ENCODE measurements at regions of chr22 and their contacts with region 1.

Region 1: GRCh38 chr22:38755911-38756532 is at the start of gene SUN2:
- DNase-seq: peak; percentile 96
- ATAC-seq: peak; percentile 73
- H3K4me3 Mint-ChIP-seq: peak within 1 kb of the TSS; percentile 98
- H3K27ac Mint-ChIP-seq: peak within 1 kb of the TSS; percentile 99
- H3K4me1 Mint-ChIP-seq: peaks cover 43% of the 10 kb centered on the region
- H3K27me3 Mint-ChIP-seq: no peaks in the 10 kb centered on the region
- total RNA-seq, gene SUN2: 607 to 626 TPM

Region 2: DNA sequence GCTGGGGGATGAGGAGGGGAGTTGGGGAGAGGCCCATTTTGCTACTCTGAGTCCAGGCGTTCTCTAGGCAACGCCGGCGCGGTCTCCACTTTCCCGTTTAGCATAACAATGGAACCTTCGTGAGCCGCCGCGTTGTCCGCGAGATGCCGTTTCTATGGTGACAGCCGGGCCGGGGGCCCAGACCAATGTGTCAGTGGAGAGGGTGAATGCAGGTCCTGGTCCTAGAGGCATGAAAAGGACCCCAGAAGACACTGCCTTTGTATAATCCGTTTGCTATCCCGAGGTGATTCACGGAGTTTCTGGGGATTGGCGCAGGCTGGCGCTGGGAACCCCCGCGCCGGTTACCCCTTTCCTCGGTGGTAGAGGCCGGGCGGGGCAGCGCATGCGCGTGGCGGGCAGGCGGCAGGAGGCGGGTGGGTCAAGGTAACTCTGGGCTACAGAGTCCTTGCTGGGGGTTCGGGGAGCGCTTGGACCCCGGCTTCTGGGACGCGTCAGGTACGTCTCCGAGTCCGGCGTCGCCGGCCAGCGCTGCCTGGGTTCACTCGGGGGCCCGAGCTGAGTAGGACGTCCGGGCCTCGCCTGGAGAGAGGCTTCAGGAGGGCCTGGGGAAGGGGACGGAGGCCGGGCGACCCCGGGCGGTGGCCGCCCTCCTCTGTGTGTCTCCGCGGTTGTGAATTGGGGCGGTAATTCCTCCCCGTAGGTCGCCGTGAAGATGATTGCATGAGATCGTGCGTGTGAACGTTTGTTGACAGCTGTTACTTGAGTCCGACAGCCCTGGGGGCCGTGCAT is 99.6 kb before region 1 on chr22 and contains the starts of genes CBY1 and FAM227A:
- POLR2A ChIA-PET with region 1: no interaction called
- DNase-seq: peak; percentile 92
- ATAC-seq: peak; percentile 81
- H3K4me3 Mint-ChIP-seq: peak within 1 kb of the TSS; percentile 92
- H3K27ac Mint-ChIP-seq: peak within 1 kb of the TSS; percentile 93
- H3K4me1 Mint-ChIP-seq: peaks cover 9% of the 10 kb centered on the region
- H3K27me3 Mint-ChIP-seq: no peaks in the 10 kb centered on the region
- total RNA-seq, gene CBY1: 20.1 to 22.4 TPM
- total RNA-seq, gene FAM227A: 0.23 to 0.36 TPM

Region 3: GRCh38 chr22:38705235-38706100 is 50.6 kb before region 1 on chr22 and contains the start of gene GTPBP1:
- POLR2A ChIA-PET with region 1: interaction called, 26 read pairs
- DNase-seq: peak; percentile 85
- ATAC-seq: peak; percentile 83
- H3K4me3 Mint-ChIP-seq: peak within 1 kb of the TSS; percentile 94
- H3K27ac Mint-ChIP-seq: peak within 1 kb of the TSS; percentile 95
- H3K4me1 Mint-ChIP-seq: peaks cover 43% of the 10 kb centered on the region
- H3K27me3 Mint-ChIP-seq: no peaks in the 10 kb centered on the region
- total RNA-seq, gene GTPBP1: 98.6 TPM